Posterior cingulate gyrus (tissue), 11 donors: ENCODE measurements at regions of chr11 and their contacts with region 1.

Region 1: GRCh38 chr11:14454861-14455632 is 44.6 kb downstream of the COPB1 start:
- DNase-seq: no peak

Region 2: GRCh38 chr11:14300661-14301304 is 154.3 kb before region 1 on chr11:
- intact Hi-C with region 1: loop called (anchors 1 kb)
- DNase-seq: peak in 7 of 10 donors; percentile 54 to 89 (median 61)

Region 3: GRCh38 chr11:14411818-14412217 is 43.2 kb before region 1 on chr11:
- intact Hi-C with region 1: no loop called
- DNase-seq: no peak